CD14-positive monocyte (primary cell): ENCODE measurements at regions of chr4 and their contacts with region 1.

Region 1: DNA sequence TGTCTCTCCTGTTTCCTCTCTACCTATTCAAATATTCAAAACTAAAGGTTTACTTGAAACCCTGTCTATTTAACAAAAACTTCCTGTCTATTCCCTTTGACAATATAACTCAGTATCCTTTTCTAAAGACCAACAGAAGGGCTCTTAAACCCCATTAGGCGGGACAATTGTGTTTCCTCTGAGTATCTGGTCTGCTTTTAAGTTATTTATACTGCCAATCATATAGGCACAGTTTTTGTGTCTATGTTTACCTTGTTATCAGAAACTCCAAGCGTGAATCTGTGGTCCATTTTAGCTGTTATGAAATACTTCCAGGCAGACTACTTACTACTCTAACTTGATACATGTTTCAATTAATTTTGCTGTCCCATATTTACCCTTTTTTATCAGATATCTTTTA is 350.0 kb upstream of the CTSO start:
- DNase-seq: no peak
- H3K4me3 ChIP-seq: no peak overlapping the region
- H3K4me3 Mint-ChIP-seq: no peak overlapping the region
- H3K27ac ChIP-seq: no peak overlapping the region
- H3K27ac Mint-ChIP-seq: no peak overlapping the region
- H3K4me1 ChIP-seq: no peaks in the 10 kb centered on the region
- H3K4me1 Mint-ChIP-seq: no peaks in the 10 kb centered on the region
- H3K27me3 ChIP-seq: no peaks in the 10 kb centered on the region
- H3K27me3 Mint-ChIP-seq: no peaks in the 10 kb centered on the region
- CTCF ChIP-seq: no peak

Region 2: DNA sequence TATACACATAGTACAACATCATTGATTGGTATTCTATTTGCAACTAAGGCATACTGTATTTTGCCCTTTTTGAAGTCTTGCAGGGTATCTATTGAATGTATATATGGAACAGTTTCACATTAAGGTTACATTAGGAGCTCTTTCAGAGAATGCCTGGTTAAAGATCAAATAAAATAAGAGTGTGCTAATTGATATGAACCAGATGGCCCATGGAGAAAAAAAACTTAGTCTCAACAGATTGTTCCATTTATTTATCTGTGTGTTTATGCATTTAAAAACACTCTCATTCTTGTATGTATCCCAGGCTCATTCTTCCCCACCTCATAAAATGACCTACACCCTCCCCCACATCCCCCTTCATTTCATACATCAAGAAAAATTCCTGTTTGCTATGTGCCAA is 881.7 kb after region 1 on chr4:
- intact Hi-C with region 1: loop called in 1 of 2 experiments (anchors 10 kb)
- DNase-seq: no peak
- H3K4me3 ChIP-seq: no peak overlapping the region
- H3K4me3 Mint-ChIP-seq: no peak overlapping the region
- H3K27ac ChIP-seq: no peak overlapping the region
- H3K27ac Mint-ChIP-seq: no peak overlapping the region
- H3K4me1 ChIP-seq: no peaks in the 10 kb centered on the region
- H3K4me1 Mint-ChIP-seq: no peaks in the 10 kb centered on the region
- H3K27me3 ChIP-seq: no peaks in the 10 kb centered on the region
- H3K27me3 Mint-ChIP-seq: peaks cover 0 to 5% (median 0%) of the 10 kb centered on the region in 3 donors
- CTCF ChIP-seq: no peak

Region 3: DNA sequence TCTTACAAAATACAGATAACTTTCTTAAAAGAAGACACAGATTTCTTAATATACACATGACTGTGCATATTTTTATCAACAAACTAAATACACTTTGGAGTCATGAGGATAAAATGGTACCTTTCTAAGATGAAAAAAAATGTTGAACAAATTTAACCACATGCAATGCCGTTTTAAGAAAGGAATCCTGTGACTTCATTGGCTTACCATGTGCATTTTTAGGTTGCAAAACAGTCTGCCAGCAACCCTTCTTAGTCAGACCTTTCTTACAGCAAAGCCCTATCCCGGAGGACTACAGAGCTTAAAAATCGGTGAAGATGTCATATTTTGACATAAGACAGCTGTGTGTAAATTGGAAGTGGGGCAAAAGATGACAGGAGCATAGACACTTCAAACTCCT is 1817.5 kb after region 1 on chr4:
- intact Hi-C with region 1: loop called in 1 of 2 experiments (anchors 10 kb)
- DNase-seq: peak; percentile 43 to 73 (median 64)
- H3K4me3 ChIP-seq: peak overlapping the region in 1 of 3 experiments; percentile 37
- H3K4me3 Mint-ChIP-seq: peak overlapping the region in 1 of 2 donors; percentile 72
- H3K27ac ChIP-seq: peak overlapping the region in 1 of 2 donors; percentile 73
- H3K27ac Mint-ChIP-seq: peak overlapping the region; percentile 72 to 89 (median 74)
- H3K4me1 ChIP-seq: peaks cover 25 to 26% of the 10 kb centered on the region in 2 donors
- H3K4me1 Mint-ChIP-seq: peaks cover 38% of the 10 kb centered on the region
- H3K27me3 ChIP-seq: no peaks in the 10 kb centered on the region
- H3K27me3 Mint-ChIP-seq: no peaks in the 10 kb centered on the region
- CTCF ChIP-seq: no peak